MCF 10A (cell line): ENCODE measurements at regions of chr1 and their contacts with region 1.

Region 1: DNA sequence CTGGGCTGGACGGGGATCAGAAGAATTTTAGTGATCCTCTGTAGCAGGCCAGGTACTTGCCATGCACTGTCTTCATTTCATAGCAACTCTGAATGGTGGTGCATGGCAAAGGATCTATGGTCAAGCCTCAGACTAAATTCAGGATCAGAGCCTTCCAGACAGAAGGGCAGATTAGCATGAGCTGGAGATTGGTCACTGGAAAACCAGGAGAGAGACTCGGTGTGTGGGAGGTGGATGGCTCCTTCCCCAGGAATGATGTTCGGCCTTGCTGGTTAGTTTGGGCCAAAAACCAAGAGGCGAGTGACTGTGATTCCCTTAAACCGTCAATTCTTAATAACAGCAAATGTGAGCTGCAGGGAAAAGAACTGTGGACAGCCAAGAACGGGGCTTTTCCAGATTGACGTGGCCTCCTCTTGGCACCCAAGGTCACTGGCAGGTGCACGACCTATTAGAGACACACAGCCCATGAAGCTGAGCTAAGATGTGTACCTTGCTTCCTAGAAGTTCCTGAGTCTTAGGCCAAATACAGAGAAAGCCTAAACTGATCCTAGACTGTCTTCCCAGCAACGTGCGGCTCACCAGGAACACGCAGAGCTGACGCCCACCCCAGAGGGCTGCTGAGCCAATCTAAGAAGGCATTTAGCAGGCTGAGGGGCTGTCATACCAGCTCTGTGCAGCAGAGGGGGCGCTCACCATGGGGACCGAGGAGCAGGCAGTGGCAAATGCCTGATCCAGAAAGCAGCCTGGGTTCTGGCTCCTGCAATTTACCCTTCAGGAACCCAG is 18.5 kb downstream of the ALDH4A1 start:
- DNase-seq: peak; percentile 65
- H3K4me3 Mint-ChIP-seq: no peak overlapping the region
- H3K27ac Mint-ChIP-seq: no peak overlapping the region
- H3K4me1 Mint-ChIP-seq: peaks cover 5% of the 10 kb centered on the region
- H3K27me3 Mint-ChIP-seq: no peaks in the 10 kb centered on the region
- CTCF ChIP-seq: peak; percentile 86

Region 2: GRCh38 chr1:19113697-19114092 is 229.9 kb after region 1 on chr1:
- CTCF ChIA-PET with region 1: interaction called, 19 read pairs
- POLR2A ChIA-PET with region 1: no interaction called
- intact Hi-C with region 1: no loop called
- DNase-seq: peak; percentile 54
- H3K4me3 Mint-ChIP-seq: no peak overlapping the region
- H3K27ac Mint-ChIP-seq: no peak overlapping the region
- H3K4me1 Mint-ChIP-seq: no peaks in the 10 kb centered on the region
- H3K27me3 Mint-ChIP-seq: no peaks in the 10 kb centered on the region
- CTCF ChIP-seq: peak; percentile 26